HepG2 (cell line): ENCODE measurements at regions of chr2 and their contacts with region 1.

Region 1: GRCh38 chr2:95345566-95346230 is 48.6 kb downstream of the KCNIP3 start:
- DNase-seq: peak; percentile 29
- ATAC-seq: peak; percentile 95
- H3K4me3 ChIP-seq: peak overlapping the region; percentile 21 to 71 (median 47); a peak in 4 of 6 replicates
- H3K27ac ChIP-seq: no peak overlapping the region
- H3K4me1 ChIP-seq: peaks cover 7% of the 10 kb centered on the region; the same call in 1 of the 2 replicates
- H3K27me3 ChIP-seq: peaks cover 16 to 91% of the 10 kb centered on the region in 2 experiments; a peak in 4 of 5 replicates
- CTCF ChIP-seq: peak; percentile 94
- EP300 ChIP-seq: no peak
- POLR2A ChIP-seq: no peak
- RAD21 ChIP-seq: peak; percentile 86

Region 2: GRCh38 chr2:95323347-95324185 is 22.1 kb before region 1 on chr2:
- CTCF ChIA-PET with region 1: no interaction called
- POLR2A ChIA-PET with region 1: no interaction called
- in situ Hi-C with region 1: no loop called
- intact Hi-C with region 1: loop called (anchors 1 kb)
- DNase-seq: peak; percentile 25
- ATAC-seq: peak; percentile 87
- H3K4me3 ChIP-seq: no peak overlapping the region
- H3K27ac ChIP-seq: no peak overlapping the region
- H3K4me1 ChIP-seq: no peaks in the 10 kb centered on the region
- H3K27me3 ChIP-seq: peaks cover 4 to 38% of the 10 kb centered on the region in 2 experiments; a peak in 4 of 5 replicates
- CTCF ChIP-seq: peak; percentile 74
- EP300 ChIP-seq: no peak
- POLR2A ChIP-seq: no peak
- RAD21 ChIP-seq: no peak

Region 3: GRCh38 chr2:95402370-95403203 is 56.9 kb after region 1 on chr2 and contains the start of gene FAHD2A:
- CTCF ChIA-PET with region 1: no interaction called
- POLR2A ChIA-PET with region 1: interaction called, 3 read pairs
- in situ Hi-C with region 1: no loop called
- intact Hi-C with region 1: loop called (anchors 1 kb)
- DNase-seq: peak; percentile 89
- ATAC-seq: peak; percentile 93
- H3K4me3 ChIP-seq: peak within 1 kb of the TSS; percentile 88 to 99 (median 94)
- H3K27ac ChIP-seq: peak within 1 kb of the TSS; percentile 82
- H3K4me1 ChIP-seq: peaks cover 23% of the 10 kb centered on the region
- H3K27me3 ChIP-seq: no peaks in the 10 kb centered on the region; a peak in 1 of 5 replicates
- CTCF ChIP-seq: peak; percentile 24; the same call in 1 of the 2 replicates
- EP300 ChIP-seq: no peak
- POLR2A ChIP-seq: peak; percentile 84 to 94
- RAD21 ChIP-seq: peak; percentile 59
- total RNA-seq, gene FAHD2A: 44.2 and 48.4 TPM in 2 replicates

Region 4: GRCh38 chr2:95728878-95729596 is 383.3 kb after region 1 on chr2:
- CTCF ChIA-PET with region 1: interaction called, 7 read pairs
- POLR2A ChIA-PET with region 1: no interaction called
- in situ Hi-C with region 1: no loop called
- intact Hi-C with region 1: loop called (anchors 1 kb)
- DNase-seq: peak; percentile 76
- ATAC-seq: peak; percentile 98
- H3K4me3 ChIP-seq: no peak overlapping the region
- H3K27ac ChIP-seq: no peak overlapping the region
- H3K4me1 ChIP-seq: no peaks in the 10 kb centered on the region
- H3K27me3 ChIP-seq: no peaks in the 10 kb centered on the region
- CTCF ChIP-seq: peak; percentile 87
- EP300 ChIP-seq: no peak
- POLR2A ChIP-seq: no peak
- RAD21 ChIP-seq: peak; percentile 75